CD4-positive, alpha-beta memory T cell (primary cell): ENCODE measurements at regions of chr5 and their contacts with region 1.

Region 1: GRCh38 chr5:148443998-148444397 is 60.2 kb downstream of the FBXO38 start:
- DNase-seq: peak; percentile 42 to 48 (median 43)
- H3K4me3 ChIP-seq: no peak overlapping the region
- H3K4me3 Mint-ChIP-seq: no peak overlapping the region
- H3K27ac ChIP-seq: no peak overlapping the region
- H3K27ac Mint-ChIP-seq: no peak overlapping the region
- H3K4me1 ChIP-seq: no peaks in the 10 kb centered on the region
- H3K4me1 Mint-ChIP-seq: peaks cover 0 to 1% (median 0%) of the 10 kb centered on the region in 4 donors
- H3K27me3 ChIP-seq: no peaks in the 10 kb centered on the region
- H3K27me3 Mint-ChIP-seq: no peaks in the 10 kb centered on the region

Region 2: GRCh38 chr5:146825033-146825432 is 1619.0 kb before region 1 on chr5:
- CTCF ChIA-PET with region 1: no interaction called
- POLR2A ChIA-PET with region 1: no interaction called
- intact Hi-C with region 1: no loop called
- DNase-seq: peak in 1 of 5 donors; percentile 2
- H3K4me3 ChIP-seq: no peak overlapping the region
- H3K4me3 Mint-ChIP-seq: no peak overlapping the region
- H3K27ac ChIP-seq: no peak overlapping the region
- H3K27ac Mint-ChIP-seq: no peak overlapping the region
- H3K4me1 ChIP-seq: no peaks in the 10 kb centered on the region
- H3K4me1 Mint-ChIP-seq: peaks cover 0 to 5% (median 0%) of the 10 kb centered on the region in 4 donors
- H3K27me3 ChIP-seq: no peaks in the 10 kb centered on the region
- H3K27me3 Mint-ChIP-seq: no peaks in the 10 kb centered on the region

Region 3: DNA sequence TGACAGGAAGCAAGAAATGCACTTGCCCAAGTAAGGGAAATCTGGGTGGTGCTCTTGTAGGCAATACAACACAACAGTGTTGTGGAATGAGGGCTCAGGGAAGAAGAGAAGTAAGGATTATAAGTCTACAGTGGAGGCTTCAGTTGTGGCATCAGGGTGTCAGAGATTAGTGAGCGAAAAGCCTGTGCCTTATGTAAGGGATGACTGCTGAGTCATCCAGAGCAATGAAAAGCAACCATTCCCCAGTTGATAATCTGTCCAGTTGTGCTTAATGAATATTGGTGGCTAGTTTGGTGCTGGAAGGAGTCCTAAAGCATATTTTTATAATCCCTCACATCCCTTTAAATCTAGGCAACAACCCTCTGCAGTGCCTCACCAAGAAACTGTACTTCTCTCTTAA is 18.2 kb before region 1 on chr5:
- CTCF ChIA-PET with region 1: interaction called, 18 read pairs
- POLR2A ChIA-PET with region 1: no interaction called
- intact Hi-C with region 1: no loop called
- DNase-seq: no peak
- H3K4me3 ChIP-seq: no peak overlapping the region
- H3K4me3 Mint-ChIP-seq: no peak overlapping the region
- H3K27ac ChIP-seq: no peak overlapping the region
- H3K27ac Mint-ChIP-seq: peak overlapping the region in 2 of 7 donors; percentile 5 to 77
- H3K4me1 ChIP-seq: no peaks in the 10 kb centered on the region
- H3K4me1 Mint-ChIP-seq: peaks cover 8 to 21% (median 12%) of the 10 kb centered on the region in 4 donors
- H3K27me3 ChIP-seq: no peaks in the 10 kb centered on the region
- H3K27me3 Mint-ChIP-seq: no peaks in the 10 kb centered on the region

Region 4: DNA sequence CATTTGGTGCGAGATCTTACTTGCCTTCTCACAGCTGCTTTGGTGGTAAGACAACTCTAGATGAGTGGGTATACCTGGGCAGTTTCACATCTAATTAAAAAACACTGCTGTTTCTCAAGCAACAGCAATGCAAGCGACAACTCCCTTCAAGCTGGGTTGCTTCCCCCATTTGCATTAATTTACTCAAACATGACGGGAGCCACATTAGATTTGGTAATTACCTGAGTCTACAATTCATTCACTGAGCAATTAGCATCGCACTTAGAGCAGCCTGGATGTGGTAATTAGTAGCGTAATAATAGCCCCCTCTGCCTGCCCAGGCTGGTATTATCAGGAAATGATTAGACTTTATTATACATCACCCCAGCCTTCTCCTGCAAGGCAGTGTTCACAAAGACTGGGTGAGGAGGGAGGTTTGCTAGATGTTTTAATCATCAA is 13.2 kb after region 1 on chr5:
- CTCF ChIA-PET with region 1: interaction called, 21 read pairs
- POLR2A ChIA-PET with region 1: no interaction called
- intact Hi-C with region 1: no loop called
- DNase-seq: peak in 4 of 5 donors; percentile 8 to 21 (median 13)
- H3K4me3 ChIP-seq: no peak overlapping the region
- H3K4me3 Mint-ChIP-seq: no peak overlapping the region
- H3K27ac ChIP-seq: no peak overlapping the region
- H3K27ac Mint-ChIP-seq: no peak overlapping the region
- H3K4me1 ChIP-seq: no peaks in the 10 kb centered on the region
- H3K4me1 Mint-ChIP-seq: peaks cover 0 to 1% (median under 1%) of the 10 kb centered on the region in 4 donors
- H3K27me3 ChIP-seq: peaks cover 5% of the 10 kb centered on the region
- H3K27me3 Mint-ChIP-seq: peaks cover 14 to 17% of the 10 kb centered on the region in 2 donors

Region 5: GRCh38 chr5:148482691-148483462 is 38.9 kb after region 1 on chr5:
- CTCF ChIA-PET with region 1: interaction called, 6 read pairs
- POLR2A ChIA-PET with region 1: no interaction called
- intact Hi-C with region 1: loop called (anchors 1 kb)
- DNase-seq: peak in 4 of 5 donors; percentile 45 to 53 (median 49)
- H3K4me3 ChIP-seq: no peak overlapping the region
- H3K4me3 Mint-ChIP-seq: peak overlapping the region in 4 of 8 donors; percentile 43 to 73 (median 56)
- H3K27ac ChIP-seq: no peak overlapping the region
- H3K27ac Mint-ChIP-seq: no peak overlapping the region
- H3K4me1 ChIP-seq: no peaks in the 10 kb centered on the region
- H3K4me1 Mint-ChIP-seq: peaks cover 0 to 7% (median 5%) of the 10 kb centered on the region in 4 donors
- H3K27me3 ChIP-seq: no peaks in the 10 kb centered on the region
- H3K27me3 Mint-ChIP-seq: peaks cover 24 to 33% of the 10 kb centered on the region in 2 donors

Region 6: GRCh38 chr5:148687427-148687826 is 243.4 kb after region 1 on chr5:
- CTCF ChIA-PET with region 1: no interaction called
- POLR2A ChIA-PET with region 1: no interaction called
- intact Hi-C with region 1: no loop called
- DNase-seq: no peak
- H3K4me3 ChIP-seq: no peak overlapping the region
- H3K4me3 Mint-ChIP-seq: no peak overlapping the region
- H3K27ac ChIP-seq: no peak overlapping the region
- H3K27ac Mint-ChIP-seq: no peak overlapping the region
- H3K4me1 ChIP-seq: no peaks in the 10 kb centered on the region
- H3K4me1 Mint-ChIP-seq: no peaks in the 10 kb centered on the region
- H3K27me3 ChIP-seq: no peaks in the 10 kb centered on the region
- H3K27me3 Mint-ChIP-seq: peaks cover 6 to 7% of the 10 kb centered on the region in 2 donors

Region 7: GRCh38 chr5:149114403-149115312 is 670.7 kb after region 1 on chr5:
- CTCF ChIA-PET with region 1: interaction called, 4 read pairs
- POLR2A ChIA-PET with region 1: no interaction called
- intact Hi-C with region 1: loop called (anchors 1 kb)
- DNase-seq: peak; percentile 35 to 56 (median 43)
- H3K4me3 ChIP-seq: no peak overlapping the region
- H3K4me3 Mint-ChIP-seq: no peak overlapping the region
- H3K27ac ChIP-seq: no peak overlapping the region
- H3K27ac Mint-ChIP-seq: no peak overlapping the region
- H3K4me1 ChIP-seq: no peaks in the 10 kb centered on the region
- H3K4me1 Mint-ChIP-seq: no peaks in the 10 kb centered on the region
- H3K27me3 ChIP-seq: no peaks in the 10 kb centered on the region
- H3K27me3 Mint-ChIP-seq: peaks cover 13 to 14% of the 10 kb centered on the region in 2 donors